ENCODE measurements at regions of chr7 and their contacts with region 1.

Region 1: DNA sequence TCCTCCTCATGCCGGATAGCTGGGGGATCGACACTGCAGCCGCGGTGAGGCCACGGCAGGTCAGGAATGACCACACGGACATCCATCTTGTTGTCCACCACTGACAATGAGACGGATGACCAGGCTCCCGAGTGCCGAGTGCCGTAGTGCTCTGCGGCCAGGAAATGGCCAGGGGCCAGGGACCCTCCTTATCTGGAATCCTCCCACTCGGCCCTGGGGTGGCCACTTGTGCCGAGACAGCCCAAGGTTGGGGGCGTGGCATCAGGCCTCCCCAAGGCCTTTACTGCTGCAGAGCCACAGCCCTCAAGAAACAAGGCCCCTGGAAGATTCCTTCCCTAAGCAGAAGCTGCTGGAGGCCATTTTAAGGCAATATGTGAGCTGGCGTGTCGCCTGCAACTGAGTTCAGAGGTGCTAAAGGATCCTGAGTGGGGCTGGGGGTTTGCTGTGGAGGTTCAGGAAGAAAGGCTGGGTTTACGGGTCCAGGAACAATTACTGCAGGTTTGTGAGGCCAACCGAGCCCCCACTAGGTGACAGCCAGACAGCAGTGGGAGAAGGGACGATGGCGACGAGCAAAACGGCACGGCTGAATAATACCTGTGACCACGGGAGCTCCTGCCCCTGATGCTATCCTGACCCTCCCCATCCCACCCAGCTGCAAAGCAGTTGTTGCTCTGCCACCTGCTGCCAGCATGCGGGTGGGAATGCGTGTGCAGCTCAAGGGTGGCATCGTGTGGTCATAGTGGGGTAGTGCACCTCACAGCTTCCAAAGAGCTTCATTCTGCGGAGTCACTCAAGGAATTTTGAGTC is 31.6 kb upstream of the LEP start:
- DNase-seq: peak; percentile 44
- H3K4me3 ChIP-seq: no peak overlapping the region
- H3K27ac ChIP-seq: no peak overlapping the region
- H3K27me3 ChIP-seq: peaks cover 60% of the 10 kb centered on the region
- CTCF ChIP-seq: peak; percentile 99

Region 2: GRCh38 chr7:127504715-127505114 is 704.7 kb before region 1 on chr7:
- CTCF ChIA-PET with region 1: interaction called, 24 read pairs
- POLR2A ChIA-PET with region 1: no interaction called
- DNase-seq: no peak
- H3K4me3 ChIP-seq: no peak overlapping the region
- H3K27ac ChIP-seq: no peak overlapping the region
- H3K27me3 ChIP-seq: no peaks in the 10 kb centered on the region
- CTCF ChIP-seq: peak; percentile 61

Region 3: GRCh38 chr7:127708788-127709187 is 500.6 kb before region 1 on chr7:
- CTCF ChIA-PET with region 1: interaction called, 141 read pairs
- POLR2A ChIA-PET with region 1: no interaction called
- DNase-seq: peak; percentile 68
- H3K4me3 ChIP-seq: no peak overlapping the region
- H3K27ac ChIP-seq: no peak overlapping the region
- H3K27me3 ChIP-seq: no peaks in the 10 kb centered on the region
- CTCF ChIP-seq: peak; percentile 76

Region 4: GRCh38 chr7:128031901-128032604 is 177.4 kb before region 1 on chr7:
- CTCF ChIA-PET with region 1: interaction called, 20 read pairs
- POLR2A ChIA-PET with region 1: no interaction called
- DNase-seq: peak; percentile 77
- H3K4me3 ChIP-seq: peak overlapping the region; percentile 54
- H3K27ac ChIP-seq: no peak overlapping the region
- H3K27me3 ChIP-seq: no peaks in the 10 kb centered on the region
- CTCF ChIP-seq: peak; percentile 40

Region 5: GRCh38 chr7:128104035-128104742 is 105.2 kb before region 1 on chr7:
- CTCF ChIA-PET with region 1: interaction called, 11 read pairs
- POLR2A ChIA-PET with region 1: no interaction called
- DNase-seq: no peak
- H3K4me3 ChIP-seq: peak overlapping the region; percentile 50
- H3K27ac ChIP-seq: no peak overlapping the region
- H3K27me3 ChIP-seq: peaks cover 26% of the 10 kb centered on the region
- CTCF ChIP-seq: no peak

Region 6: GRCh38 chr7:128190051-128190647 is 19.3 kb before region 1 on chr7:
- CTCF ChIA-PET with region 1: interaction called, 11 read pairs
- POLR2A ChIA-PET with region 1: interaction called, 7 read pairs
- DNase-seq: no peak
- H3K4me3 ChIP-seq: no peak overlapping the region
- H3K27ac ChIP-seq: no peak overlapping the region
- H3K27me3 ChIP-seq: peaks cover 47% of the 10 kb centered on the region
- CTCF ChIP-seq: no peak

Measured in AG04450 (cell line).